ENCODE measurements at regions of chr17 and their contacts with region 1.

Region 1: DNA sequence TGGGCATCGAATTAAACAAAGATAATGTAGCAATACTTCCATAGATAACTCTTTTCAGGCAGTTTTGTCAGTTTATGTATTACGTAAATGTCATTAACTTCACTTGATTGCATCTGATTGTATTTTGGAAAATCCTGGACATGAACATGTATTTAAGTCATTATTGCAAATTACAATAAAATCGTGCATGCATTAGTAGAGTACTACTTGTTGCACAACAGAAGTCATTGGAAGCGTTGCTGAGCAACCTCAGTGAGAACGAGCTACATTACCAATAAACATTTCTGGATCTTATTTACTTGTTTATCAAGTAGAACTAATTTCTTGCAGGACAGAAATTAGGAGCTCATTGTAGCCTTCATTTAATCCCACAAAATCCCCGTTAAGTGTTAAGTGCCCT is 6.6 kb downstream of the UNK start:
- DNase-seq: no peak
- ATAC-seq: no peak

Region 2: DNA sequence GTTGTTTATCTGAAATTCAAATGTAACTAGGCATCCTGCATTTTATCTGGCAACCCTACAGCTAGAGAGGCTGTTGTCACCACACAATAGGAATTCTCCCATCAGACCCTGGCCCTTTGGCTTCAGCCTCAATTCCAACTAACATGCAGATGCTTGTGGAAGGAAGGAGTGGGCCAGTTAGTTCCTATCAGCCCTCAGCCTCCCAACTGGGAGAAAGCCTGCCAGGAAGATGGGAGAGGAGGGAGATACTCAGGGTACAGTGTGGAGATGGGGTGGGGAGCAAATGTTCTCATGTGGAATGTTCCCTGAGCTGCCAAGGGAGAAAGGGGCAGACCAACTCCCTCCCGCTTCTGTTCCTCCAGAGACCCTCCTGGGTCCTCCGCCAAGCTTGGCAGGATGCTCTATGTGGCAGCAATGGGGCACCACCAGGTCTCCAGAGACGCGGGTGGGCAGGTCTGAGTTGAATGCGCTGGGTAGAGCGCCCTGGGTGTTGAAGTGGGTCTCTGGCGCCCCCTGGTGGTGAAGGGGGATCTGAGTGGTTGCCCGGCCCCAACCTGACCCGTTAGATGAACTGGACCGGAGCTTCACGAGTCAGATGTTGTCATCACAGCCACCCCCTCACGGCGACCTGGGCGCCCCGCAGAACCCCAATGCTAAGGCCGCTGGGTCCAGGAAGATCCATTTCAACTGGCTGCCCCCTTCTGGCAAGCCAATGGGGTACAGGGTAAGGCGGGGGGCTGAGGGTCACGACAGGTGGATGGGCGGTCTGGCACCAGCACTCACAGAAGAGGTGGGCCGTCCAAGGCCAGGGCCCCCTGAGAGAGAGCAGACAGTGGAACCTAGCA is 41.5 kb before region 1 on chr17:
- intact Hi-C with region 1: no loop called
- DNase-seq: peak; percentile 94
- ATAC-seq: peak; percentile 81

Region 3: GRCh38 chr17:75850928-75851692 is 59.9 kb after region 1 on chr17:
- intact Hi-C with region 1: loop called (anchors 2 kb)
- DNase-seq: no peak
- ATAC-seq: no peak

Region 4: DNA sequence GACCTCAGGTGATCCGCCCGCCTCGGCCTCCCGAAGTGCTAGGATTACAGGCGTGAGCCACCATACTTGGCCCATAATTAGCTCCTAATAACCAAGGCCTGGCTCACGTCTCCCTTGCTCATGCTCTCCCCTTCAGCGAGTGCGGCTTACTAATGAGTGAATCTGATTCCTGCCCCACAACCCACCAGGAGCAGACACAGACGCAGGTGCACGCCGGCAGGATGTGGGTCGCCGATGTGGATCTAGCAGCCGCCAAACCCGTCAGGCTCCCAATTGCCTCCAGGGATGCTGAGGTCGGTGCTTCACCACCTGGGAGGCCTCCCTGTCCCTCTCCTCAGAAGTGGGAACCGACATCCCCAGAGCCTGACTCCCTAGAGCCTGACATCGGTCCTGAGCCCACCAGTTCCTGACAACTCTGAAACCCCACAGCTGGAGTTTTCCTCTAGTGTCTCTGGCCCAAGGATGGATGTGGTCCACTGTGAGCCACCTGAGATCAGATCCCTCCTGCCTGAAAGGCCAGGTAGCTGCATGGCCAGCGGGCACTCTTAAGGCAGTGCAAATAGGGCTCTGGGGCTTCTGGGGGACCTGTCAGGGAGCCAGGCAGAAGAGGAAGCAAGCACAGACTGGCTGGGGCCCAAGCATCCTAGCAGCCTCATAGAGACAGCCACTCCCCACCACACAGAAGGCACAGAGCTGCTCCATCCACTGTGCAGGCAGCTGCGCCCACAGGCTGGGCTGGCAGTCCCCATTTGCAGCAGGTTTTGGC is 301.5 kb after region 1 on chr17:
- intact Hi-C with region 1: no loop called
- DNase-seq: no peak
- ATAC-seq: no peak